ENCODE measurements at regions of chr16 and their contacts with region 1.

Region 1: DNA sequence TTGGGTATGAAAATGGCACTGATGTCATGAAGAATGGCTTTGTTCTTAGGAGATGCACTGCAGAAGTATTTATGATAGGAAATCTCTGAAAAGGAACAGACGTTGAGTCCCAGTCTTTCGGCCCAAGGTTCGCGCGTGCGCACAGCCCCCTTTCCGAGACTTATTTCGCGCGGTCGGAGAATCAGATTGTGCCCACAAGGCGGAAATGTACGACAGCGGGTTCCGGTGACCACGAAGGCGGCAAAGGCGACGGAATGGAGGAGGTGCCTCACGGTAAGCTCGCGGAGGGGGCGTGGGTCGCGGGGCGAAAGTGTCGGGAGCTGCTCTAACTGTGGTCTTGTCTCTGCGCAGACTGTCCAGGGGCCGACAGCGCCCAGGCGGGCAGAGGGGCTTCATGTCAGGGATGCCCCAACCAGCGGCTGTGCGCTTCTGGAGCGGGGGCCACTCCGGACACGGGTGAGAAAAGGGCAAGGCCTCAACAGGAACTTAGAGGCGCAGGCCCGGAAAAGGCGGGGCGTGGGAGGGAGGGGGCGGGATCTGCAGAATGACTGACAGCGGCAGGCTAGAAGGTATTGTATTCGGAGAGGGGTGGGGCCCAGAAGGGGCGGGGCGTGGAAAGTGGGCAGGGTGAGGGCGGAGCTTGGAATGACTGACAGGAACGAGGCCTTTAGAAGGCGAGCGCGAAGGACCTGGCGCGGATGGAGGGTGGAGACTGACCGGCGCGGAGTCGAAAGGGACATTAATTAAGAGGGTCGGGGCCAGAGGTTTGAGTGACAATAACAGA is at the start of gene NUBP1:
- DNase-seq: peak; percentile 99
- H3K4me3 ChIP-seq: peak within 1 kb of the TSS; percentile 71
- H3K27ac ChIP-seq: peak within 1 kb of the TSS; percentile 99
- H3K4me1 ChIP-seq: peaks cover 45% of the 10 kb centered on the region
- H3K27me3 ChIP-seq: no peaks in the 10 kb centered on the region
- CTCF ChIP-seq: no peak
- total RNA-seq, gene NUBP1: 50.6 TPM

Region 2: GRCh38 chr16:10522966-10523365 is 220.8 kb before region 1 on chr16:
- intact Hi-C with region 1: no loop called
- DNase-seq: no peak
- H3K4me3 ChIP-seq: no peak overlapping the region
- H3K27ac ChIP-seq: no peak overlapping the region
- H3K4me1 ChIP-seq: peaks cover 2% of the 10 kb centered on the region
- H3K27me3 ChIP-seq: no peaks in the 10 kb centered on the region
- CTCF ChIP-seq: no peak

Region 3: GRCh38 chr16:10616730-10617555 is 126.9 kb before region 1 on chr16:
- intact Hi-C with region 1: no loop called
- DNase-seq: peak; percentile 74
- H3K4me3 ChIP-seq: peak overlapping the region; percentile 15
- H3K27ac ChIP-seq: peak overlapping the region; percentile 73
- H3K4me1 ChIP-seq: peaks cover 37% of the 10 kb centered on the region
- H3K27me3 ChIP-seq: no peaks in the 10 kb centered on the region
- CTCF ChIP-seq: peak; percentile 46

Region 4: DNA sequence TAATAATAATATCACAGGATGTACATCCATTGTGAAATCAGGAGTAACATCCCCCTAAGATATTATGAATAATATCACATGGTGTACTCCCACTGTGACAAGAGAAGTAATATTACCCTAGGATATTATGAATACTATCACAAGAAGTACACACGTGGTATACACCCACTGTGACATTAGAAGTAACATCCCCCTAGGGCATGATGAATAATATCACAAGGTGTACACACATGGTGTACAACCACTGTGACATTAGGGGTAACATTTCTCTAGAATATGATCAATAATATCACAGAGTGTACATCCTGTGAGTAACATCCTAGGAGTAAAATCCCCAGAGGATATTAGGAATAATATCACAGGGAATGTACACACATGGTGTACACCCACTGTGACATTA is 44.0 kb before region 1 on chr16:
- intact Hi-C with region 1: no loop called
- DNase-seq: no peak
- H3K4me3 ChIP-seq: no peak overlapping the region
- H3K27ac ChIP-seq: no peak overlapping the region
- H3K4me1 ChIP-seq: no peaks in the 10 kb centered on the region
- H3K27me3 ChIP-seq: no peaks in the 10 kb centered on the region
- CTCF ChIP-seq: no peak

Region 5: GRCh38 chr16:10828851-10829731 is 85.3 kb after region 1 on chr16:
- intact Hi-C with region 1: loop called (anchors 5 kb)
- DNase-seq: peak; percentile 96
- H3K4me3 ChIP-seq: peak overlapping the region; percentile 37
- H3K27ac ChIP-seq: peak overlapping the region; percentile 100
- H3K4me1 ChIP-seq: peaks cover 53% of the 10 kb centered on the region
- H3K27me3 ChIP-seq: no peaks in the 10 kb centered on the region
- CTCF ChIP-seq: no peak

Region 6: GRCh38 chr16:10918294-10919002 is 174.6 kb after region 1 on chr16:
- intact Hi-C with region 1: loop called (anchors 10 kb)
- DNase-seq: peak; percentile 95
- H3K4me3 ChIP-seq: peak overlapping the region; percentile 57
- H3K27ac ChIP-seq: peak overlapping the region; percentile 89
- H3K4me1 ChIP-seq: peaks cover 51% of the 10 kb centered on the region
- H3K27me3 ChIP-seq: no peaks in the 10 kb centered on the region
- CTCF ChIP-seq: peak; percentile 98

Measured in left ventricle myocardium inferior (tissue), 1 donor.